Activated T-helper 2 cell treated with anti-CD3 and anti-CD28 coated beads, Interferon-gamma antibody, Interleukin-2, Interleukin-4, amounts not matched to agents 10 μg/mL and 5 μg/mL and 100 μg/mL, durations not matched to agents 14 hours and 24 hours and 36 hours (primary cell): ENCODE measurements at regions of chr9 and their contacts with region 1.

Region 1: GRCh38 chr9:127503947-127504782 is 52.9 kb downstream of the LRSAM1 start:
- DNase-seq: peak; percentile 73
- H3K4me3 Mint-ChIP-seq: no peak overlapping the region
- H3K27ac Mint-ChIP-seq: peak overlapping the region; percentile 16
- H3K4me1 Mint-ChIP-seq: no peaks in the 10 kb centered on the region
- H3K27me3 Mint-ChIP-seq: no peaks in the 10 kb centered on the region

Region 2: GRCh38 chr9:127586537-127586936 is 82.4 kb after region 1 on chr9:
- intact Hi-C with region 1: loop called (anchors 1 kb)
- DNase-seq: no peak
- H3K4me3 Mint-ChIP-seq: no peak overlapping the region
- H3K27ac Mint-ChIP-seq: no peak overlapping the region
- H3K4me1 Mint-ChIP-seq: peaks cover 8% of the 10 kb centered on the region
- H3K27me3 Mint-ChIP-seq: peaks cover 13% of the 10 kb centered on the region